ENCODE measurements at regions of chr18 and their contacts with region 1.

Region 1: GRCh38 chr18:9971313-9971920 is 57.6 kb downstream of the VAPA start:
- DNase-seq: peak; percentile 70
- H3K4me3 ChIP-seq: no peak overlapping the region; a peak in 1 of 4 replicates
- H3K27ac ChIP-seq: no peak overlapping the region
- H3K4me1 ChIP-seq: no peaks in the 10 kb centered on the region
- H3K27me3 ChIP-seq: no peaks in the 10 kb centered on the region
- CTCF ChIP-seq: peak; percentile 83
- EP300 ChIP-seq: no peak
- RAD21 ChIP-seq: peak; percentile 100

Region 2: GRCh38 chr18:9941103-9941502 is 30.3 kb before region 1 on chr18:
- CTCF ChIA-PET with region 1: no interaction called
- POLR2A ChIA-PET with region 1: no interaction called
- DNase-seq: no peak
- H3K4me3 ChIP-seq: no peak overlapping the region
- H3K27ac ChIP-seq: no peak overlapping the region
- H3K4me1 ChIP-seq: no peaks in the 10 kb centered on the region
- H3K27me3 ChIP-seq: no peaks in the 10 kb centered on the region
- CTCF ChIP-seq: no peak
- EP300 ChIP-seq: no peak
- RAD21 ChIP-seq: no peak

Region 3: GRCh38 chr18:9951022-9951859 is 20.2 kb before region 1 on chr18:
- CTCF ChIA-PET with region 1: interaction called, 12 read pairs
- POLR2A ChIA-PET with region 1: no interaction called
- DNase-seq: peak; percentile 57
- H3K4me3 ChIP-seq: no peak overlapping the region
- H3K27ac ChIP-seq: no peak overlapping the region
- H3K4me1 ChIP-seq: peaks cover 0 to 11% of the 10 kb centered on the region in 2 experiments; a peak in 2 of 4 replicates
- H3K27me3 ChIP-seq: no peaks in the 10 kb centered on the region
- CTCF ChIP-seq: peak; percentile 78
- EP300 ChIP-seq: no peak
- RAD21 ChIP-seq: peak; percentile 78

Region 4: DNA sequence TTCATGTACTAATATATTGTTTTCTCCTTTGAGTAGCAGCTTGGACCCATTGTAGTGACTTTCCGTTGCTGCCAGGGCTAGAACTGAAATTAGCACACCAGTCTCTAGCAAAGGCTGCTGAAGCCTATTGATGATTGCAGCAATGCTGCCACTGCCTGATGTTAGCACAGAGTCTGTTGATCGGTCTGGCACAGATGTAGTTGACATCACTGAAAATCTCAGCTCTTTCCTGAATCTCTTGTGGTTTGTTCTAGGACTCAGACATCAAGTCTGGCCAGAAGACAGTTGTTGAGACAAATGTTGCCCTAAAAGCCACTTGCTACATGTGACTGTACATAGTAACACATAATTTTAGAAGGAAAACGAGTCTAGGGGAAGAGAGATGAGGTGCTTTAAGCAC is 10.4 kb before region 1 on chr18:
- CTCF ChIA-PET with region 1: interaction called, 13 read pairs
- POLR2A ChIA-PET with region 1: no interaction called
- DNase-seq: no peak
- H3K4me3 ChIP-seq: no peak overlapping the region
- H3K27ac ChIP-seq: no peak overlapping the region
- H3K4me1 ChIP-seq: peaks cover 0 to under 1% of the 10 kb centered on the region in 2 experiments; a peak in 1 of 4 replicates
- H3K27me3 ChIP-seq: no peaks in the 10 kb centered on the region
- CTCF ChIP-seq: no peak
- EP300 ChIP-seq: no peak
- RAD21 ChIP-seq: no peak

Region 5: GRCh38 chr18:9982711-9983110 is 11.3 kb after region 1 on chr18:
- CTCF ChIA-PET with region 1: interaction called, 23 read pairs
- POLR2A ChIA-PET with region 1: no interaction called
- DNase-seq: no peak
- H3K4me3 ChIP-seq: no peak overlapping the region
- H3K27ac ChIP-seq: no peak overlapping the region
- H3K4me1 ChIP-seq: no peaks in the 10 kb centered on the region
- H3K27me3 ChIP-seq: no peaks in the 10 kb centered on the region
- CTCF ChIP-seq: no peak
- EP300 ChIP-seq: no peak
- RAD21 ChIP-seq: no peak

Region 6: GRCh38 chr18:9987931-9988330 is 16.5 kb after region 1 on chr18:
- CTCF ChIA-PET with region 1: interaction called, 23 read pairs
- POLR2A ChIA-PET with region 1: no interaction called
- DNase-seq: no peak
- H3K4me3 ChIP-seq: no peak overlapping the region
- H3K27ac ChIP-seq: no peak overlapping the region
- H3K4me1 ChIP-seq: no peaks in the 10 kb centered on the region
- H3K27me3 ChIP-seq: no peaks in the 10 kb centered on the region; the same call in 1 of the 2 replicates
- CTCF ChIP-seq: no peak
- EP300 ChIP-seq: no peak
- RAD21 ChIP-seq: no peak

Measured in SK-N-SH (cell line).